IMR-90 (cell line): ENCODE measurements at regions of chr9 and their contacts with region 1.

Region 1: GRCh38 chr9:108444400-108445358 is 411.1 kb downstream of the ACTL7B start:
- DNase-seq: peak; percentile 96
- ATAC-seq: peak; percentile 60
- H3K4me3 ChIP-seq: peak overlapping the region; percentile 30
- H3K27ac ChIP-seq: peak overlapping the region; percentile 96
- H3K4me1 ChIP-seq: peaks cover 19% of the 10 kb centered on the region
- H3K27me3 ChIP-seq: no peaks in the 10 kb centered on the region
- CTCF ChIP-seq: no peak
- POLR2A ChIP-seq: no peak
- RAD21 ChIP-seq: no peak

Region 2: DNA sequence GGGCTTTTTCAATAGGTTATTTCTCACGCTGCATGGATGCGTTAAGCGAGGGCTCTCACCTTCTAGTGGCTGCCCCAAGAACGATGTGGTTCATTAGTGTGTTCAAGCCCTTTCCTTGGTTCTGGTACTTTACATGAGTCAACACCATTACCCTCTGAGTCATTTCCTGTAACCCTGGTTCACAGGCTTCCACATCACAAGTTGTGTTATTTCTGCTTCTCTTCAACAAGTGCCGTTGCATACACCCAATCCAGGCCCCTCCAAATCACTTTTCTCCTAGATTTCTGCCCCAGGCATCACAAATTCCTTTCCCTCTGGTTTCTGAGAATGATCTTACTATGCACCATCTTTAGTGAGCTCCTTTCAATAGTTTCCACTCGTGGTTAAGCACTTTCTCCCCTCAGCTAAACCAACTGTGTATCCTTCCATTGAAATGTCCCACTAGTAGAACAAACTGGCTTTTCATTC is 1231.1 kb before region 1 on chr9:
- CTCF ChIA-PET with region 1: no interaction called
- POLR2A ChIA-PET with region 1: no interaction called
- dilution Hi-C with region 1: no loop called
- in situ Hi-C with region 1: no loop called
- intact Hi-C with region 1: no loop called
- DNase-seq: peak; percentile 94
- ATAC-seq: peak; percentile 74
- H3K4me3 ChIP-seq: no peak overlapping the region
- H3K27ac ChIP-seq: peak overlapping the region; percentile 72
- H3K4me1 ChIP-seq: peaks cover 8% of the 10 kb centered on the region
- H3K27me3 ChIP-seq: no peaks in the 10 kb centered on the region
- CTCF ChIP-seq: no peak
- POLR2A ChIP-seq: no peak
- RAD21 ChIP-seq: no peak

Region 3: GRCh38 chr9:107484117-107484723 is 960.5 kb before region 1 on chr9:
- CTCF ChIA-PET with region 1: no interaction called
- POLR2A ChIA-PET with region 1: no interaction called
- dilution Hi-C with region 1: no loop called
- in situ Hi-C with region 1: no loop called
- intact Hi-C with region 1: loop called (anchors 5 kb)
- DNase-seq: peak; percentile 81
- ATAC-seq: peak; percentile 74
- H3K4me3 ChIP-seq: no peak overlapping the region
- H3K27ac ChIP-seq: no peak overlapping the region
- H3K4me1 ChIP-seq: peaks cover 2% of the 10 kb centered on the region
- H3K27me3 ChIP-seq: no peaks in the 10 kb centered on the region
- CTCF ChIP-seq: peak; percentile 66
- POLR2A ChIP-seq: peak; percentile 82
- RAD21 ChIP-seq: peak; percentile 78

Region 4: DNA sequence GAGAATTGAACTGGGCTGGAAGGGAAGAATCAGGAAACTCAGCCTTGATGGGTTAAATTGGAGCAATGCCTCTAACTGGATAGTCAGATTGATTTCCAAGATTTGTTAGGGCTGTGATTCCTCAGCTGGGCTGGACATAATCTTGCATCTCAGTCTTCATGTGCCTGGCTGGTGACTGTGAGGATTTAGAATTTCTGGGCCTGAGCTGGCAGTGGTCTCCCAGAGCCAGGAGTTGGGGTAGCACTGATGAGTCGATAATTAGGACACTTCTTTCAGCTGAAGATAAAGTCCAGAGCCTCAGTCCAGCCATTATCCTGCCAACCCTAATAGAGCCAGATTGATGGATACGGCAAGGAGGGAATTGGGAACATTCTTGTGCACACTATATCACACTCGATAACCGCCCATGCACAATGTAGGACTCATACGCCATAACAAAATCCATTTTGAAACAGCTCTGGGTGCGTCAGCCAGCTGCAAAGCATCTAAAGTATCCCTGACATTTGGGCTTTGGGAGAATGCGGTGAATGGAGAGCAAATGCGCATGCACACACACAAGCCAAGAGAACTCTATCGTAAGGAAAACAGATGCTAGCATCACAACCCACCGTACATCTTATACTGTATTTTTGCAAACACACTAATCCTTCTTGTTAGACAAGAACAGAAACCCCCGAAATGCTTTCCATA is 550.0 kb before region 1 on chr9:
- CTCF ChIA-PET with region 1: no interaction called
- POLR2A ChIA-PET with region 1: no interaction called
- dilution Hi-C with region 1: no loop called
- in situ Hi-C with region 1: no loop called
- intact Hi-C with region 1: loop called (anchors 10 kb)
- DNase-seq: peak; percentile 93
- ATAC-seq: peak; percentile 84
- H3K4me3 ChIP-seq: no peak overlapping the region
- H3K27ac ChIP-seq: peak overlapping the region; percentile 82; the same call in 1 of the 2 replicates
- H3K4me1 ChIP-seq: peaks cover 12% of the 10 kb centered on the region
- H3K27me3 ChIP-seq: no peaks in the 10 kb centered on the region
- CTCF ChIP-seq: no peak
- POLR2A ChIP-seq: no peak
- RAD21 ChIP-seq: no peak

Region 5: DNA sequence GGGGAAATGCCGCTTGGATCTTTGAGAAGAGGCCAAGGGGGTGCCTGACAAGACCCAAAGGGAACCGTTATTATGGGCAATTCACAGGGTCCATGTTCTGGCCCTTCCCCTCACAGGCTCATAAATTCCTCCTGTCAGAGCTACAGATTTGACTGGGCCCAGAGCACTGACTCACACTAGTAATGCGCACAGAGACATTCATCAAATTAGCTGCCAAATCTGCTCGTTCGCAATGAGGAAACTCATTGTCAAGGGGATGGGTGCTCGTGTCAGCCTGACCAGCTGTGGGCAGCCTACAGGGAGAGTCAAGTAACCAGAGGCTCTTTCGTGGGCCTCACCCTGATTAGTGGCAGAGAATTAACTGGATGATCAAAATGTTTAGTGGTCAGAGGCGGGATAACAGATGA is 33.8 kb after region 1 on chr9:
- CTCF ChIA-PET with region 1: interaction called, 3 read pairs
- POLR2A ChIA-PET with region 1: no interaction called
- dilution Hi-C with region 1: no loop called
- in situ Hi-C with region 1: no loop called
- intact Hi-C with region 1: loop called (anchors 5 kb)
- DNase-seq: peak; percentile 90
- ATAC-seq: peak; percentile 56
- H3K4me3 ChIP-seq: no peak overlapping the region
- H3K27ac ChIP-seq: peak overlapping the region; percentile 95
- H3K4me1 ChIP-seq: peaks cover 18% of the 10 kb centered on the region
- H3K27me3 ChIP-seq: no peaks in the 10 kb centered on the region
- CTCF ChIP-seq: no peak
- POLR2A ChIP-seq: no peak
- RAD21 ChIP-seq: no peak

Region 6: DNA sequence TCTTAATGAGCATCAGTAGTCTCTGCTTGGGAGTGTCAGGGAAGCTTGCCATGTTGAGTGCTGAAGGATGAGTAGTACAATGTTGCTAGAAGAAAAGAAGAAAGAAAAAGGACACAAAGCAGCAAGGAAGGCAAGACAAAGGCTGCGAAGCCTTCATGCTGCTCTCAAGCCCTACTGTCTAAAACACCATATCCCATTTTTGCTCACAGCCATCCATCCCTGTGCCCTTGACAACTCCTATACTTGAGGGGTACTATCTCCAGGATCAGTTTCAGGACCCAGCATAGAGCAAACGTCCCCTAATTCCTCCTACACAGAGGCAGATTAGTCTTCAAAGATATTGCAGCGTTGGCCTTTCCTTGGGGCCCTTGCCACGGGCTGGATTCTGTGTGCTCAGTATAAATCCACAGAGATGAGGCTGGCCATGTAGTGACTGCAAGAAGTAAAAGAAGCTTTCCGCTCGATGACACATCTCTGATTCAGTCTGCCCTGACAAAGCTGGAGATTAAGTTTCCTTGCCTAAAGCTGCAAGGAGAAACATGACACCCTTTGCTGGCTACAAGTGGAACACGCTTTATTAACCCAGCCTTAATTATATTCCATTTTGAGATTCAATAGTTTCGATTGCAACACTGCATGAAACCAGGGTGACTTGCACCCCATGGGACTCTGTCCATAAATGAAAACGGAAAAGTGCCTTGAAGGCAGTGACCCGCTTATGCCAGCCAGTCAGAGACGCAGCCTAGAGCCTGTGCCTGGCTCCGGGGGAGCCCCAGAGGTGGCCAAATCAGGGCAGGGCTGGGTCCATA is 106.6 kb after region 1 on chr9:
- CTCF ChIA-PET with region 1: no interaction called
- POLR2A ChIA-PET with region 1: no interaction called
- dilution Hi-C with region 1: no loop called
- in situ Hi-C with region 1: no loop called
- intact Hi-C with region 1: loop called (anchors 5 kb)
- DNase-seq: peak; percentile 96
- ATAC-seq: peak; percentile 94
- H3K4me3 ChIP-seq: no peak overlapping the region
- H3K27ac ChIP-seq: peak overlapping the region; percentile 89
- H3K4me1 ChIP-seq: peaks cover 16% of the 10 kb centered on the region
- H3K27me3 ChIP-seq: no peaks in the 10 kb centered on the region
- CTCF ChIP-seq: no peak
- POLR2A ChIP-seq: no peak
- RAD21 ChIP-seq: peak; percentile 24; the same call in 1 of the 2 replicates